BJ (cell line): ENCODE measurements at regions of chr20 and their contacts with region 1.

Region 1: DNA sequence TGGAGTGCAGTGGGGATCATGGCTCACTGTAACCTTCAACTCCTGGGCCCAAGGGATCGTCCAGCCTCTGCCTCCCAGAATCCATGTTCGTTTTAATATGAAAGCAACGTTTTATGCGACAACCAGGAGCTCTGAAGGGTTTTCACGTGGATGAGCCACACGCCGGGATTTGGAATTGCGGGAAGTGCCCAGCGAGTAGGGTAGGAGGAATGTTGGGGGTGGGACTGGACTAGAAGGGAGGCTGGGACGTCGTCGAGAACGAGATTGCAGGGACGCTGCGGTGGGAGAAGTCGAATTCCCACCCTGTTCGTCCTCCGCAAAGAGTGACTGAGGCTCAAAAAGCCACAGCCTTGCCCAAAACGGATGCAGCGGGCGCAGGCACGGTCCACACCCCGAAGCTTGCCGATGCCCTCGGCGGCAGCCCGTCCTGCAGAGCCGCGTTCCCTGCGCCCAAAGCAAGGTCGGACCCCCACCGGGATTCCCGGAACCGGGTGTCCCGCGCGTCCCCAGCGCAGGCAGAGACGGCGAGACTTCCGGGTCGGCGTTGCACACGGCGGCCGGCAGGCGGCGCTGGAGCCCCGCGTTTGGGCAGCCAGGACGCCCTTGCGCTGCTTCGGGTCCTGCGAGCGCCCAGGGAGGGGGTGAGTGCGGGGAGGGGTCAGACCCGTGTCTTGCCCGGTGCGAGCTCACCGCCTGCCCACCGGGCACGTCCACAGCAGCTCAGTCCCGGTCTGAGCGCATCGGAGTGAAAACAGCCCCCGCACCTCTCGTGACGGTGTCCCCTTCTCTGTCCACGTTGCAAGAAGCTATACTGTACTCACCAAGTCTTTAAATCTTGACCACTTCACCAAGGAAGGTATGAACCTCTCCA is 87.8 kb downstream of the DHX35 start:
- DNase-seq: no peak
- H3K4me3 ChIP-seq: peak overlapping the region; percentile 73
- H3K27me3 ChIP-seq: peaks cover 4% of the 10 kb centered on the region
- CTCF ChIP-seq: peak; percentile 88

Region 2: GRCh38 chr20:38926142-38926933 is 123.6 kb before region 1 on chr20 and contains the start of gene FAM83D:
- CTCF ChIA-PET with region 1: interaction called, 163 read pairs
- POLR2A ChIA-PET with region 1: interaction called, 6 read pairs
- DNase-seq: peak; percentile 91
- H3K4me3 ChIP-seq: peak within 1 kb of the TSS; percentile 88
- H3K27me3 ChIP-seq: peaks cover 4% of the 10 kb centered on the region
- CTCF ChIP-seq: no peak
- polyA plus RNA-seq, gene FAM83D: 26.6 and 40.1 TPM in 2 replicates

Region 3: GRCh38 chr20:38962044-38962927 is 87.6 kb before region 1 on chr20 and contains the start of gene DHX35:
- CTCF ChIA-PET with region 1: interaction called, 11 read pairs
- POLR2A ChIA-PET with region 1: no interaction called
- DNase-seq: peak; percentile 73
- H3K4me3 ChIP-seq: peak within 1 kb of the TSS; percentile 87
- H3K27me3 ChIP-seq: no peaks in the 10 kb centered on the region
- CTCF ChIP-seq: peak; percentile 49
- polyA plus RNA-seq, gene DHX35: 12.1 and 14.5 TPM in 2 replicates

Region 4: DNA sequence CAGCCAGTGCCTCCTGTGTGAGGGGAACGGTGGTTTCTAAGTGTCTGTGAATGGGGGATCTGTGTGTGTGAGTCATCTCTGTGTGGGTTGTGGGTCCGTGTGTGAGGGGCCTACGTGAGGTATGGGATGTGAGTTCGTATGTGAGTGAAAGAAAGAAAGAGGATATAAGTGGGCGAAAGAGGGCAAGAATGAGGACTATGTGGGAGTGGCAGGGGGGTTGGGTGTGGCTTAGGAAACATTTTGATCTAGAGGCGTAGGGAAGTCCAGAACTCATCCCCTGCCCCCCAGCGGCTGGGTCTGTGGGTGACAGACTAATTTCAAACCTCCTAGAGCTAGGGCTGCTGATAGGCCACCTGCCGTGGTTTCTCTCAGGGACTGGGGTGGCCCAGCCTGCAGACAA is 52.3 kb before region 1 on chr20:
- CTCF ChIA-PET with region 1: interaction called, 15 read pairs
- POLR2A ChIA-PET with region 1: no interaction called
- DNase-seq: no peak
- H3K4me3 ChIP-seq: no peak overlapping the region
- H3K27me3 ChIP-seq: no peaks in the 10 kb centered on the region
- CTCF ChIP-seq: no peak

Region 5: GRCh38 chr20:39081255-39081654 is 31.3 kb after region 1 on chr20:
- CTCF ChIA-PET with region 1: interaction called, 399 read pairs
- POLR2A ChIA-PET with region 1: no interaction called
- DNase-seq: peak; percentile 17
- H3K4me3 ChIP-seq: no peak overlapping the region
- H3K27me3 ChIP-seq: peaks cover 7% of the 10 kb centered on the region
- CTCF ChIP-seq: peak; percentile 91

Region 6: GRCh38 chr20:39124064-39124463 is 74.1 kb after region 1 on chr20:
- CTCF ChIA-PET with region 1: no interaction called
- POLR2A ChIA-PET with region 1: no interaction called
- DNase-seq: no peak
- H3K4me3 ChIP-seq: no peak overlapping the region
- H3K27me3 ChIP-seq: no peaks in the 10 kb centered on the region
- CTCF ChIP-seq: no peak